PC-3 (cell line): ENCODE measurements at regions of chr11 and their contacts with region 1.

Region 1: DNA sequence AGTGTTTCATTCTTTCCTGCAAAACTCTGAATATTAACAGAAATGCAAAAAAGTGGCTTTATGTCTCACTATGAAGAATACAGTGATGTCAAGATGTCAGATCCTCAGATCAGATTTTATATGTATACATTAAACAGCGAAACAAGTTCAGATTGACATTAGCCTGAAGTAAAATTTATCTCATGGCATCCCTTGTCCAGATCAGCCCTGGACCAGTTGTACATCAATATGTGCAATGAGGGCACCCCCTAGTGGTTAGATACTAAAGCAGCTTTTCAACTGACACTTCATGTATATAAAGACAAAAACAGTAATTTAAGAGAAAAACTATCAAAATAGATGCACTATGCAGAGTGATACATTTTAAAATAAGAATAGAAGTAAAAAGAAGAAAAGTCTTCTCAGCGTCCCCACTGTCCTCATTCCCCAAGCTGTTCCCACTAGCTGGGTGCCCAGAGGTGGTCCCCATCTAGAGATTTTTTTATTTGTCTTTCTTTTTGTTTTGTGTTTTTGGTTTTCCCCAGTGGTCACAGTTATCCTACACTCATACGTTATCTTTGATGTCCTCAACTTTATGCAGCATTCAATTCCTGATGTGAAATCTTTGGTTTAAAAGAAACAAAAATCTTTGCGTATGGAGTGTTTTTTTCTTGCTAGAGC is 2193.4 kb upstream of the RAG2 start:
- DNase-seq: peak; percentile 75
- ATAC-seq: peak; percentile 67
- H3K4me3 ChIP-seq: no peak overlapping the region
- H3K27ac ChIP-seq: no peak overlapping the region
- H3K4me1 ChIP-seq: no peaks in the 10 kb centered on the region
- H3K27me3 ChIP-seq: no peaks in the 10 kb centered on the region
- CTCF ChIP-seq: peak; percentile 85

Region 2: DNA sequence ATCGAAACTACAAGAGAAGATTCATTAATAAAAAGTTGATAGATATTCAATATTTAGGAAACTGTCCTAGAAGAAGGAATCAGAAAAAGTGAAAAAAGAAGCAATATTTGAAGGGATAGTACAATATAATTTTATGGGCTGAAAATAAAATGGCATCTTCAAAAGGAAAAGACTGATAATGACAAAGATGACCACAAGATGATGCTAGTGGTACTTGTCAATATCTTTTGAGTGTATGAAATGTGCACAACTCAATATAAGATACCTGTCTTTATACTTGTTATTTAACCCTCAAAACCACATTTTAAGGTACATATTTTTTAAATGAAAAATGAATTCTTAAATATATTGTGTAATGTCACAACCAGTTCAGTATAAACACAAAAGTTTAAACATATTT is 1133.8 kb before region 1 on chr11:
- CTCF ChIA-PET with region 1: no interaction called
- POLR2A ChIA-PET with region 1: no interaction called
- intact Hi-C with region 1: loop called (anchors 1 kb)
- DNase-seq: peak; percentile 57
- ATAC-seq: 0 out of 2 replicates have a peak, but pooled peaks have one; percentile 24
- H3K4me3 ChIP-seq: no peak overlapping the region
- H3K27ac ChIP-seq: no peak overlapping the region
- H3K4me1 ChIP-seq: no peaks in the 10 kb centered on the region
- H3K27me3 ChIP-seq: no peaks in the 10 kb centered on the region
- CTCF ChIP-seq: peak; percentile 65

Region 3: GRCh38 chr11:37946155-37946766 is 845.2 kb before region 1 on chr11:
- CTCF ChIA-PET with region 1: no interaction called
- POLR2A ChIA-PET with region 1: no interaction called
- intact Hi-C with region 1: loop called (anchors 1 kb)
- DNase-seq: peak; percentile 54
- ATAC-seq: 0 out of 2 replicates have a peak, but pooled peaks have one; percentile 31
- H3K4me3 ChIP-seq: no peak overlapping the region
- H3K27ac ChIP-seq: no peak overlapping the region
- H3K4me1 ChIP-seq: peaks cover 11% of the 10 kb centered on the region
- H3K27me3 ChIP-seq: no peaks in the 10 kb centered on the region
- CTCF ChIP-seq: peak; percentile 69

Region 4: GRCh38 chr11:38089726-38090125 is 701.7 kb before region 1 on chr11:
- CTCF ChIA-PET with region 1: no interaction called
- POLR2A ChIA-PET with region 1: no interaction called
- intact Hi-C with region 1: no loop called
- DNase-seq: peak; percentile 58
- ATAC-seq: no peak
- H3K4me3 ChIP-seq: no peak overlapping the region
- H3K27ac ChIP-seq: no peak overlapping the region
- H3K4me1 ChIP-seq: no peaks in the 10 kb centered on the region
- H3K27me3 ChIP-seq: no peaks in the 10 kb centered on the region
- CTCF ChIP-seq: no peak

Region 5: GRCh38 chr11:38191101-38191500 is 600.3 kb before region 1 on chr11:
- CTCF ChIA-PET with region 1: interaction called, 3 read pairs
- POLR2A ChIA-PET with region 1: no interaction called
- intact Hi-C with region 1: loop called (anchors 1 kb)
- DNase-seq: peak; percentile 6
- ATAC-seq: no peak
- H3K4me3 ChIP-seq: no peak overlapping the region
- H3K27ac ChIP-seq: no peak overlapping the region
- H3K4me1 ChIP-seq: no peaks in the 10 kb centered on the region
- H3K27me3 ChIP-seq: no peaks in the 10 kb centered on the region
- CTCF ChIP-seq: peak; percentile 19; the same call in 1 of the 2 replicates

Region 6: DNA sequence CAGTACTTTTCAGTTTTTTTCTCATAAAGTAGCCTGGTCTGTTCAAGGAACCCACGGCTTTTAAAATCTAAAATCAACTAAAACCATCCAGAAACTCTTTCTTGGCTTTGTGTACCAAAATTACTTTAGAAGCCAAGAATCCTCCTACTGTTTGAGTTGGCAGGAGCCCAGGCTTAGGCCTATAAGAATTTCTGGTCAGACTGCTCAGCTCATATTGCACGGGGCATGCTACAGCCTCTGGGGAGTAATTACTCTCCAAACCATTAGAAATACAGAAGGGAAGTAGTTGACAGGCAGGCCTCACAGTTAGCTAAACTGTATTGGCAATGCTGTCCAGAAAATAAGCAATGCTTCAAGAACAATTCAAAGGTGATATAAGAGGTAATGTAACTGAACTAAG is 330.5 kb before region 1 on chr11:
- CTCF ChIA-PET with region 1: no interaction called
- POLR2A ChIA-PET with region 1: no interaction called
- intact Hi-C with region 1: loop called (anchors 1 kb)
- DNase-seq: peak; percentile 88
- ATAC-seq: peak; percentile 90
- H3K4me3 ChIP-seq: peak overlapping the region; percentile 48
- H3K27ac ChIP-seq: peak overlapping the region; percentile 89
- H3K4me1 ChIP-seq: peaks cover 27% of the 10 kb centered on the region
- H3K27me3 ChIP-seq: no peaks in the 10 kb centered on the region
- CTCF ChIP-seq: no peak

Region 7: GRCh38 chr11:39011797-39012196 is 220.4 kb after region 1 on chr11:
- CTCF ChIA-PET with region 1: no interaction called
- POLR2A ChIA-PET with region 1: no interaction called
- intact Hi-C with region 1: no loop called
- DNase-seq: no peak
- ATAC-seq: no peak
- H3K4me3 ChIP-seq: no peak overlapping the region
- H3K27ac ChIP-seq: no peak overlapping the region
- H3K4me1 ChIP-seq: no peaks in the 10 kb centered on the region
- H3K27me3 ChIP-seq: no peaks in the 10 kb centered on the region
- CTCF ChIP-seq: no peak

Region 8: GRCh38 chr11:39365809-39366436 is 574.5 kb after region 1 on chr11:
- CTCF ChIA-PET with region 1: no interaction called
- POLR2A ChIA-PET with region 1: no interaction called
- intact Hi-C with region 1: loop called (anchors 2 kb)
- DNase-seq: peak; percentile 75
- ATAC-seq: peak; percentile 93
- H3K4me3 ChIP-seq: no peak overlapping the region
- H3K27ac ChIP-seq: no peak overlapping the region
- H3K4me1 ChIP-seq: no peaks in the 10 kb centered on the region
- H3K27me3 ChIP-seq: no peaks in the 10 kb centered on the region
- CTCF ChIP-seq: peak; percentile 73